ENCODE measurements at regions of chr1 and their contacts with region 1.

Region 1: GRCh38 chr1:167819849-167820683 is 93.9 kb downstream of the ADCY10 start:
- DNase-seq: peak; percentile 79 to 92 (median 85)
- ATAC-seq: peak; percentile 87 to 98 (median 97)
- H3K4me3 ChIP-seq: peak overlapping the region in 10 of 12 donors; percentile 36 to 51 (median 45)
- H3K27ac ChIP-seq: peak overlapping the region; percentile 52 to 81 (median 73)
- H3K4me1 ChIP-seq: peaks cover 0 to 15% (median 4%) of the 10 kb centered on the region in 12 donors
- H3K27me3 ChIP-seq: no peaks in the 10 kb centered on the region
- CTCF ChIP-seq: no peak
- POLR2A ChIP-seq: peak in 1 of 2 donors; percentile 60

Region 2: DNA sequence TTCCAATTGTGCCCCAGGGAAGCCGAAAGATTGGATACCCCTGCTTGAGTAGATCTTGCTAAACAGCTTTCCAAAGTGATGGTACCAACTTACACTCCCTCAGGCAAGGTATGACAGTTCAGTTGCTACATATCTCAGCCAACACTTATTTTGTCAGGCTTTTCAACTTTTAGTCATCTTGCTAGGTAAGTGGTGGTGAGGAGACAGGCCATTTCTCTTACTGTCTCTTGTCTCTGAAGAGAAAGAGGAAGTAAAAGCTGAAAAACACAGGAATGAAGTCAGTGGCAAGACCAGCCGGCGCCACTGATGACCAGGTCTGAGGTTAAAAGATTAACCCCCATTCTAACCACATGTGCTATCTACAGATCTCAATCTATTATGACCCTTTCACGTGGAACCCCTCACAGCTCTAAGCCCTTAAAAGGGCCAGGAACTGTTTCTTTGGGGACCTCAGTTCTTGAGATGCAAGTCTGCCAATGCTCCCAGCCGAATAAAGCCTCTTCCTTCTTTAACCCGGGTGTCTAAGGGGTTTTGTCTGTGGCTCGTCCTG is 89.6 kb after region 1 on chr1:
- intact Hi-C with region 1: loop called in 1 of 10 experiments (anchors 10 kb)
- DNase-seq: no peak
- ATAC-seq: no peak
- H3K4me3 ChIP-seq: no peak overlapping the region
- H3K27ac ChIP-seq: no peak overlapping the region
- H3K4me1 ChIP-seq: peaks cover 0 to 22% (median 0%) of the 10 kb centered on the region in 12 donors
- H3K27me3 ChIP-seq: no peaks in the 10 kb centered on the region
- CTCF ChIP-seq: no peak
- POLR2A ChIP-seq: no peak

Measured in heart left ventricle (tissue), 16 donors.